ENCODE measurements at regions of chr15 and their contacts with region 1.

Region 1: DNA sequence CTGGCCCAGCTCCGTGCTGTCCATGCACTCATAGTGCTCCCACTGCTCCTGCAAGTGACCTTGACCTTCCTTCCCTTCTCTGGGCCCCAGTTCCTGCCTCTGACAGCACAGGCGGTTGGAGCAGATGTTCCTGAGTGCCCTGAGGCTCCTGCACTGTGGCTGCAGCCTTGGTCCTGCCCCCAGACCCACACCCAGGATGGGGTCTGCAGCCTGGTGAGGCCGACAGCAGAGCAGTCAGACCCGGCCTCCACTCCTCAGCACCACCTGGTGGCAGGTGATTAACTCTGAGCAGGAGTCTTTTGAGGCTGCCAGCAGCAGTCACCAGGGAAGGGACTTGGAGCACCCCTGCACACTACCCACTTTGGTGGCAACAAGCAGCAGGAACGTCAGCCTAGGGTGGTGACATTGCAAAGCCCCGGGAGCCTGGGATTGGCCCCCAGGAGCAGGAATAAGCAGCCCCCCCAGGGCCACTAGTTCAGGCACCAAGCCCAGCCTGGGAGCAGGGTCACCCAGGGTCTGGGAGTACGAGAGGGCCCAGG is 64.6 kb downstream of the CYP11A1 start:
- DNase-seq: peak; percentile 55 to 58
- H3K4me3 ChIP-seq: no peak overlapping the region
- H3K27ac ChIP-seq: no peak overlapping the region
- H3K4me1 ChIP-seq: no peaks in the 10 kb centered on the region
- H3K27me3 ChIP-seq: no peaks in the 10 kb centered on the region
- CTCF ChIP-seq: peak; percentile 27 to 64 (median 54)
- POLR2A ChIP-seq: no peak

Region 2: DNA sequence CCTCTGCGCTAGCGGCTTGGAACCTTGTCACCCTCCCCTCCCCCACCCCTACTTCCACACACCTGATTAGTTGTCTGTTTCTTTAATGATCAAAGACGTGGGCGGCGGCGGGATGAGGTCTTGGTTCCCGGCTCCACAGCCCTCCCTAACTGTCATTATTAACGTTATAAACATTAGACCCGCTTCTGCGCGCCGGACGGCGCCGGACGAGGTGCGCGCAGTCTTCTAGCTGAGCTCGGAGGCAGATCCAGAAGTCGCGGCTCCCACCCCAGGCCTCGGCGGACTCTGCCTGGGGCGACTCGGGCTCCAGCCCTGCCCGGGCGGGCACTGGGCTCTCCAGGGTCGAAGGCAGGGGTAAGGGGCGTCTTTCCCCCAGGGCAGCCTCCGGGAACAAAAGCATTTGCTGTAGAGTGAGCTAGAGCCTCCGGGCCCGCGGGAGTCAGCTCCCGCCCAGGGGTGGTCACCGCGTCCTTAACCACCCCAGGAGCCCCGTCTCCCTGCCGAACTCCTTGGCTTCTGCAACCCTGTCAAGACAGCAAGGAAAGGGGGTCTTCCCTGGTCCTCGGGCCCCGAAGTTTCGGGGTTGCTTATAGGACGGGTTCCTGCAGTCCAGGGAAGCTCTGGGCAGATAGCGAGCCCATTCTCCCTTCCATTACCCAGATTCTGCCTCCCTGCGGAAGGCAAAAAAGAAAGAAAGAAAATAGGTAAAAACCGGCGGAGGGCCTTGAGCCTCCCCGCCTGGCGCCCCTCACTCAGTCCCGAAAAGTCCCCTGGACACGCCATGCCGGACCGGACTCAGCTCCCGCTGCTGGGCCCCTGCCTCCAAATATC is 174.7 kb before region 1 on chr15:
- intact Hi-C with region 1: loop called (anchors 2 kb)
- DNase-seq: no peak
- H3K4me3 ChIP-seq: peak overlapping the region in 1 of 3 donors; percentile 7
- H3K27ac ChIP-seq: no peak overlapping the region
- H3K4me1 ChIP-seq: peaks cover 3 to 34% of the 10 kb centered on the region in 2 donors
- H3K27me3 ChIP-seq: peaks cover 25% of the 10 kb centered on the region
- CTCF ChIP-seq: no peak
- POLR2A ChIP-seq: no peak